GM10248 (cell line): ENCODE measurements at regions of chr4 and their contacts with region 1.

Region 1: DNA sequence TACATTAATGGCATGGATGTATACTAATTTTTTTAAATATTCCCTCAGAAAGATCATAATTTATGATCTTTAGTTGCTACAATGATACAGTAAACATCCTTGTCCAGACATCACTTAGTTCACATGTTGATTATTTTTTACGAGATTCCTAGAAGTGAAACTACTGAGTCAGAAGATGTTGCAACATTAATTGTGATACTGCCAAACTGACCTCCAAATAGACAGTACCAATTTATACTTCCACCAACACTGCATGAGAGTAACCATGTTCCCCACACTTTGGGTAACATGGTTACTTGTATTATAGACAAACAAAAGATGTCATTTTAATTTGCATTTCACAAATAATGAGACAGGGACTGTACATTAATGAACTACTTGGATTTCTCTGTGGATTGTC is 19.6 kb downstream of the RCHY1 start:
- DNase-seq: no peak
- CTCF ChIP-seq: no peak

Region 2: GRCh38 chr4:75514131-75514948 is 19.8 kb after region 1 on chr4 and contains the starts of genes RCHY1 and THAP6:
- CTCF ChIA-PET with region 1: interaction called, 18 read pairs
- POLR2A ChIA-PET with region 1: interaction called, 4 read pairs
- DNase-seq: peak; percentile 85
- CTCF ChIP-seq: no peak

Region 3: GRCh38 chr4:76125816-76126215 is 631.3 kb after region 1 on chr4:
- CTCF ChIA-PET with region 1: no interaction called
- POLR2A ChIA-PET with region 1: no interaction called
- DNase-seq: no peak
- CTCF ChIP-seq: no peak